Lower lobe of right lung (tissue), 2 donors: ENCODE measurements at regions of chr2 and their contacts with region 1.

Region 1: DNA sequence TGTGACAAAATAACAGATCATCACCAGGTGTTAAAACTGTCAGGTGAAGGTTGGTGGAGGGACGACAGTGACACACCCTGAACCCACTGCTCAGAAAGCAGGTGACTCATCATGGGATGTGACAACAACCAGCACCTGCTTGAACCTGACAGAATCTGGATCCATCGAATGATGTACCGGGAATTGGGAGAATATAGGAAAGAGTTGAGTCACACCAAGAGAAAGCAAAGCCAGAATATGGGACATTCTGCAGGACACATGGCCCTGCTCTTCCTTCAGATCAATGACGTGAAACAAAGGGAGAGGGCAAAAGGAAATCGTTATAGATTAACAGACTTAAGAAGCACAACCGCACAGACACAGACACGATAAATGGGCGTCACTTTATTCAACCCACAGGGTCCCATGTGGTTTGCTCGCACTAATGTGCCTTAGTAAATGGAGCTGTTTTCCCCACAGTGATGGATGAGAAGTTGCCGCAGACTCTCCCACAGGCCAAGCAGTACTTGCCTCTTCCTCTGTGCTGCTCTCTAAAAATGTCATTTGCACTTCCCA is 100.1 kb downstream of the CRACDL start:
- DNase-seq: no peak
- ATAC-seq: no peak
- H3K4me3 ChIP-seq: no peak overlapping the region
- H3K27ac ChIP-seq: no peak overlapping the region
- H3K4me1 ChIP-seq: peaks cover 30% of the 10 kb centered on the region
- H3K27me3 ChIP-seq: no peaks in the 10 kb centered on the region
- CTCF ChIP-seq: no peak

Region 2: GRCh38 chr2:98649135-98649991 is 186.5 kb before region 1 on chr2:
- intact Hi-C with region 1: loop called (anchors 5 kb)
- DNase-seq: peak; percentile 65
- ATAC-seq: peak; percentile 96 to 97
- H3K4me3 ChIP-seq: no peak overlapping the region
- H3K27ac ChIP-seq: no peak overlapping the region
- H3K4me1 ChIP-seq: peaks cover 20% of the 10 kb centered on the region
- H3K27me3 ChIP-seq: no peaks in the 10 kb centered on the region
- CTCF ChIP-seq: peak; percentile 96